Upper lobe of right lung (tissue), 1 donor: ENCODE measurements at regions of chr11 and their contacts with region 1.

Region 1: GRCh38 chr11:86456052-86456939 is 81.6 kb downstream of the CCDC81 start:
- DNase-seq: peak; percentile 79
- ATAC-seq: peak; percentile 85
- H3K4me3 ChIP-seq: no peak overlapping the region
- H3K27ac ChIP-seq: no peak overlapping the region
- H3K4me1 ChIP-seq: peaks cover 31% of the 10 kb centered on the region
- H3K27me3 ChIP-seq: no peaks in the 10 kb centered on the region
- CTCF ChIP-seq: peak; percentile 95

Region 2: GRCh38 chr11:86571273-86571948 is 115.1 kb after region 1 on chr11:
- intact Hi-C with region 1: no loop called
- DNase-seq: no peak
- ATAC-seq: peak; percentile 37
- H3K4me3 ChIP-seq: no peak overlapping the region
- H3K27ac ChIP-seq: no peak overlapping the region
- H3K4me1 ChIP-seq: no peaks in the 10 kb centered on the region
- H3K27me3 ChIP-seq: no peaks in the 10 kb centered on the region
- CTCF ChIP-seq: no peak

Region 3: DNA sequence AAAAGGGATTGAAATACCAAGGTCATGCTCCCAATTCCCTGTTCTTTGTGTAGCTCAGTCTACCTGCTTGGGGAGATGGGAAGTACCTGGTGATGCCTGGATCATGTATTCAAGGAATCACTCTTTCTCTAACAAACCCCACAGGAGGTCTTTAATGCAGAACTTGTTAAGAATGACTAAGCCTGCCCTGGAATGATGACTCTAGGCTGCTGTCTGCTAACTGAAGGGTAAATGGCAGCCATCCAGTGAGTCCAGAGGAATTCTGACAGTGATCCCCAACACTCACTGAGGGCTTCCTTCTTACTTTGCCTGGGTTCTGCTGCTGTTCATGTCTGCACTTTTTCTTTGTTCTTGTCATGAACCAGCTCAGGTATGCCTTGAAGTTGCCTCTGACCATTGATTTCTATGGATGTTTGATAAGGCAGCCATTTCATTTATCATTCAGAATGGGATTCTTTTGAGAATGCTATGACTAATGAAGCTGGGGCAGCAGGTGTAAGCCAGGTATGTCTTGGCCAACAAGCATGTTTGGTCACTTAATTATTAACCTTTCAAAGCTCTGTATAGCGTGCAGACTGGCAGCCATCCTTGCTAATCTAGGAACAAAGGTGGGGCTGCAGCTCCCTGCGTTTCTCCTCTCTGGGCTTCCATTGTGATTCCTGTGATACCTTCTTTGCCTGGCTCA is 355.5 kb after region 1 on chr11:
- intact Hi-C with region 1: loop called (anchors 5 kb)
- DNase-seq: no peak
- ATAC-seq: no peak
- H3K4me3 ChIP-seq: no peak overlapping the region
- H3K27ac ChIP-seq: no peak overlapping the region
- H3K4me1 ChIP-seq: no peaks in the 10 kb centered on the region
- H3K27me3 ChIP-seq: no peaks in the 10 kb centered on the region
- CTCF ChIP-seq: no peak